GM12878 (cell line): ENCODE measurements at regions of chr3 and their contacts with region 1.

Region 1: GRCh38 chr3:172159962-172160538 is 120.7 kb downstream of the FNDC3B start:
- DNase-seq: no peak
- ATAC-seq: peak; percentile 56
- H3K4me3 ChIP-seq: no peak overlapping the region
- H3K27ac ChIP-seq: no peak overlapping the region; the same call in 1 of the 2 replicates
- H3K4me1 ChIP-seq: peaks cover 12% of the 10 kb centered on the region
- H3K27me3 ChIP-seq: no peaks in the 10 kb centered on the region
- CTCF ChIP-seq: no peak
- EP300 ChIP-seq: no peak
- POLR2A ChIP-seq: no peak
- RAD21 ChIP-seq: no peak

Region 2: DNA sequence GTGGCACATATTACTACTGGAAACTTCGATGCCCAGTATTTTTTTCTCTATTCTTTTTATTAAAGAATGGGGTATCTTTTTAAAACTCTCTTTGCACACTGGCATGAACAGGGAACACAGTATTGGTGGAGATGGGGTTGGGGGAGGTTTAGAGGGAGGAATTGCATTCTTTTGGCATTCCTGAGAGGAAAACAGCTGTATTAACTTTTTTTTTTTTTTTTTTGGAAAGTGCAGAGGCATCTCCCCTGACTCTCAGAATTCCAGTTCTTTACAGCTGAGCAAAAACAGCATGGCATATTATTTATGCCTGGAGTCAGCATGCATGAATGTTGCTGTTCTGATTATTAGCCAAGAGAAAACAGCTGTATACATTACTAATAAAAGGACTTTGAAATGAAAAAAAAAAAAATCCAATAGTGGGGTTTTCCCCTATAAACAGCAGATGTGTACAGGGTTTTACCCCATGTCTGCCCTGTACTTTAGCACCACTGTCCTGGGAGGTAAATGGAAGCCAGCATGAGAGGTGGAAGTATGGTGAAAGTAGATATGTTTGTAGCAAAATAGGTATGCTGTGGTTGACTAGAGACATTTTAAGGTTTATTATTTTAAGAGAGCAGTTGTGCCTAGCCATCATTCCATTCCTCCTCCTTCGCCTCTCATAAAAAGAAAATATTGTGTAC is 11.5 kb after region 1 on chr3:
- CTCF ChIA-PET with region 1: interaction called, 5 read pairs
- POLR2A ChIA-PET with region 1: interaction called, 3 read pairs
- RAD21 ChIA-PET with region 1: interaction called, 7 read pairs
- SMC1A ChIA-PET with region 1: interaction called, 441 read pairs
- in situ Hi-C with region 1: no loop called
- intact Hi-C with region 1: no loop called
- DNase-seq: no peak
- ATAC-seq: peak; percentile 71
- H3K4me3 ChIP-seq: no peak overlapping the region
- H3K27ac ChIP-seq: no peak overlapping the region
- H3K4me1 ChIP-seq: peaks cover 30% of the 10 kb centered on the region
- H3K27me3 ChIP-seq: no peaks in the 10 kb centered on the region
- CTCF ChIP-seq: no peak
- EP300 ChIP-seq: no peak
- POLR2A ChIP-seq: no peak
- RAD21 ChIP-seq: no peak